Gastrocnemius medialis (tissue), 4 donors: ENCODE measurements at regions of chr4 and their contacts with region 1.

Region 1: DNA sequence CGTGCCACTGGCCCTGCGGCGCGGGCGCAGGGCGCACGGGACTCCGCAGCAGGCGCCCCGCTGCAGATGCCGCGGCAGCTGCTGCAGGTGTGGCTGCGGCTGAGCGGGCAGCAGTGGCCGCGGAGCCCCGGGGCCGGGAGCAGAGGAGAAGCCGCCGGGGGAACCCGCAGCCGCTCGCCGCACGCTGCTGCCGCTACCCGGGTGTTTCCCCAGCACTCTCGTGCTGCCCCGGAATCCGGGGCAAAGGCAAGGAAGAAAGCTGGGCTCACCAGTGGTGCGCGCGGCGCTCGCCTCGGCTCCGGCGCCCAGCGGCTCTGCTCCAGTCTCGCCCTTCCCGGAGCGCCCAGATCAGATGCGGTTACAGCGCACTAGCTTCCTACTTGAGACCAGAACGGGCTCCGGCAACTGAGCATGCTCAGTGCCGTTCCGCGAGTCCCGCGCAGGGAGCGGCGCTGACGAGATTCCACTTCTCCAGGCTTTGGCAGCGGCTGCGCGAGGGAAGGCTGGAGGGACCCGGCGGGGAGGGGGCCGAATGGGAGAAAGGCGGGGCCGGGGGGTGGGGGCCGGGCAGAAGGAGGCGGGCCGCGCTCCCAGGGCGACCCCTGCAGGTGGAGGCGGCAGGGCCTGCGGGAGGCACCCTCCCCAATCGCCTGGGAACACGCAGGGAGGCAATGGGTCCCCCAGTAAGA is at the start of gene APBB2:
- DNase-seq: peak; percentile 80 to 91
- ATAC-seq: peak; percentile 83 to 85
- H3K4me3 ChIP-seq: peak within 1 kb of the TSS; percentile 59 to 85 (median 80)
- H3K27ac ChIP-seq: peak within 1 kb of the TSS; percentile 72 to 89 (median 78)
- H3K4me1 ChIP-seq: peaks cover 22 to 36% of the 10 kb centered on the region in 2 donors
- H3K27me3 ChIP-seq: no peaks in the 10 kb centered on the region
- CTCF ChIP-seq: peak; percentile 22 to 89 (median 63)
- POLR2A ChIP-seq: peak; percentile 65 to 77
- total RNA-seq, gene APBB2: 14.3 to 20.5 (median 14.5) TPM

Region 2: GRCh38 chr4:40840985-40841571 is 373.2 kb before region 1 on chr4:
- in situ Hi-C with region 1: no loop called
- intact Hi-C with region 1: loop called (anchors 2 kb)
- DNase-seq: peak; percentile 31 to 77
- ATAC-seq: peak; percentile 54 to 81
- H3K4me3 ChIP-seq: no peak overlapping the region
- H3K27ac ChIP-seq: peak overlapping the region; percentile 29 to 76 (median 72)
- H3K4me1 ChIP-seq: peaks cover 31 to 72% of the 10 kb centered on the region in 2 donors
- H3K27me3 ChIP-seq: no peaks in the 10 kb centered on the region
- CTCF ChIP-seq: peak; percentile 12 to 74 (median 64)
- POLR2A ChIP-seq: no peak

Region 3: DNA sequence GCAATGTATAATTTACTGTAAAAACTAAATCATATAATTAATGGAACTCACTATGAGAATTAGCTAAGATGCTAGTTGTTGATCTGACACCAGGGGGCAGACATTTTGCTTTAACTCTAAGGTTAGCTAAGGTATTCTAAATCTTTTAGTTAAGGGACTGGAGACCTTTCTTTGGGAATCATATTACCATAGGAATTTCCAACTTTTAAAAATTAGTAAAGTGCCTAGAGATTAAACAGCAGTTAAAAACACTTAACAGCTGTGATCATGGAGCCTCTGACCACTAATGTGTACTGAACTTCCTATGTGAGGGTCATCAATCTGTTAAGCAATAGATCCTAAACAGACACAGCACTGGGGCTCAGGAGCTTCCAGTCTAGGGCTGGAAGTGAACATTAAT is 237.9 kb before region 1 on chr4:
- in situ Hi-C with region 1: loop called (anchors 5 to 10 kb)
- intact Hi-C with region 1: loop called (anchors 2 kb)
- DNase-seq: no peak
- ATAC-seq: peak in 1 of 2 donors; percentile 58
- H3K4me3 ChIP-seq: no peak overlapping the region
- H3K27ac ChIP-seq: no peak overlapping the region
- H3K4me1 ChIP-seq: peaks cover 0 to 3% of the 10 kb centered on the region in 2 donors
- H3K27me3 ChIP-seq: no peaks in the 10 kb centered on the region
- CTCF ChIP-seq: peak; percentile 52 to 77 (median 63)
- POLR2A ChIP-seq: no peak

Region 4: GRCh38 chr4:41120297-41121217 is 93.7 kb before region 1 on chr4:
- in situ Hi-C with region 1: no loop called
- intact Hi-C with region 1: loop called (anchors 5 kb)
- DNase-seq: peak; percentile 53 to 66
- ATAC-seq: peak; percentile 84 to 85
- H3K4me3 ChIP-seq: peak overlapping the region; percentile 20 to 33 (median 24)
- H3K27ac ChIP-seq: peak overlapping the region; percentile 37 to 74 (median 56)
- H3K4me1 ChIP-seq: peaks cover 22 to 23% of the 10 kb centered on the region in 2 donors
- H3K27me3 ChIP-seq: no peaks in the 10 kb centered on the region
- CTCF ChIP-seq: no peak
- POLR2A ChIP-seq: no peak

Region 5: GRCh38 chr4:41174444-41174843 is 39.8 kb before region 1 on chr4:
- in situ Hi-C with region 1: no loop called
- intact Hi-C with region 1: loop called (anchors 2 kb)
- DNase-seq: no peak
- ATAC-seq: no peak
- H3K4me3 ChIP-seq: no peak overlapping the region
- H3K27ac ChIP-seq: no peak overlapping the region
- H3K4me1 ChIP-seq: peaks cover 18 to 30% of the 10 kb centered on the region in 2 donors
- H3K27me3 ChIP-seq: no peaks in the 10 kb centered on the region
- CTCF ChIP-seq: no peak
- POLR2A ChIP-seq: no peak

Region 6: DNA sequence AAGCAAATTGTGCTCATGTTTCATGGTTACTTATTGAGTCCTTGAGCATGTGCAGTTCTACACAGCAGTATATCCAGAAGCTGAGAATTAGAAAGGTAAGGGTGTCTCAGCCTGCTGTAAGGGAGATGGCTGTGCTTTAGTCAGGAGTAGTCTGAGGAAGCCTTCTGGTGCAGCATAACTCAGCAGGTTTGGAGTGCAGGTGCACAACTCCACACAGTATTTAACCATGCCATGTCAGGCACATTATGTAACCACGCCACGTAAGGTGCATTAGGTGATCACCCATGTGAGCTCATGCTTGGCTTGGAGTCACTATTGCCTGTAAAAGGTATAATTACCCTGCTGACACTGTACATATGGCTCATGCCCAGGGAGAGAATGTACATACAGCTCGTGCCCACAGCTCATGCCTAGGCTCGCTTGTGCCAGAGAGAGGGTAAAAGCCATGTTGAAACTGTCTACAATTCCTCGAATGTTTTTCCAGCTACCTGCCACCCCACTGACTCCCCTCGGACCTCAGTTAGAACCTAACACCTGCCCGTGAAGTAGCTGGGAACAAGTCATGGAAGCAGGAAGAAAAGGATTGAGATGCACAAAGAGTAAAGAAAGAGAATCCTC is 80.3 kb after region 1 on chr4:
- in situ Hi-C with region 1: no loop called
- intact Hi-C with region 1: no loop called
- DNase-seq: no peak
- ATAC-seq: no peak
- H3K4me3 ChIP-seq: no peak overlapping the region
- H3K27ac ChIP-seq: no peak overlapping the region
- H3K4me1 ChIP-seq: peaks cover 0 to 3% of the 10 kb centered on the region in 2 donors
- H3K27me3 ChIP-seq: no peaks in the 10 kb centered on the region
- CTCF ChIP-seq: no peak
- POLR2A ChIP-seq: no peak